K562 (cell line): ENCODE measurements at regions of chr5 and their contacts with region 1.

Region 1: DNA sequence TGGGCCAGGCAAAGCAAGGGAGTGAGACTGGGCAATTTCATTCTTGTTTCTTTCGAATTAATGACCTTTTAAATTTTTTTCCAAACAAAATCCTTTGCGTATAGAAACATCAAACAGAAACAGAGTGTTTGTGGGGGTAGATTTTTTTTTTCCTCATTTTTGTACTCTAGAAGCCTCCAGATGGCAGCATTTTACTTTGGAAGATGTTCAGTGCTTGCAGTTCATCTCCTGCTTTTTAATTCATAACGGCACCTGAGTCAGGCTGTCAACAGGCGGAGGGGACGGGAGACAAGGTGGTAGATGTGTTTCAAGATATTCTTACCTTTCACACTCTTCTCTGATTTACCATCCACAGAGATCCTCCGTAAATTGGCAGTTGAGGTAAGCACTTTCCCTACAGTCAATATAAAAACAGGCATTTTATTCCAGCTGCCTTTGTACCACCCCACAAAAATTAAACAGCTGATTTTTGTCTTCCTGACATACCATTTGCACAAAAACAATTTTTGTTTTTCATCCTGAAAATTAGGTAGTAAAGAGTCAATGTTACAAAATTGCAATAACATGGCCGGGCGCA is 99.5 kb upstream of the FBXL17 start:
- DNase-seq: peak; percentile 9 to 53 (median 12)
- ATAC-seq: peak; percentile 74
- H3K4me3 ChIP-seq: no peak overlapping the region
- H3K27ac ChIP-seq: no peak overlapping the region
- H3K4me1 ChIP-seq: no peaks in the 10 kb centered on the region
- H3K27me3 ChIP-seq: no peaks in the 10 kb centered on the region; a peak in 1 of 5 replicates
- CTCF ChIP-seq: peak; percentile 31 to 65 (median 50); a peak in 5 of 6 replicates
- EP300 ChIP-seq: no peak
- POLR2A ChIP-seq: no peak
- RAD21 ChIP-seq: peak; percentile 78 to 79

Region 2: DNA sequence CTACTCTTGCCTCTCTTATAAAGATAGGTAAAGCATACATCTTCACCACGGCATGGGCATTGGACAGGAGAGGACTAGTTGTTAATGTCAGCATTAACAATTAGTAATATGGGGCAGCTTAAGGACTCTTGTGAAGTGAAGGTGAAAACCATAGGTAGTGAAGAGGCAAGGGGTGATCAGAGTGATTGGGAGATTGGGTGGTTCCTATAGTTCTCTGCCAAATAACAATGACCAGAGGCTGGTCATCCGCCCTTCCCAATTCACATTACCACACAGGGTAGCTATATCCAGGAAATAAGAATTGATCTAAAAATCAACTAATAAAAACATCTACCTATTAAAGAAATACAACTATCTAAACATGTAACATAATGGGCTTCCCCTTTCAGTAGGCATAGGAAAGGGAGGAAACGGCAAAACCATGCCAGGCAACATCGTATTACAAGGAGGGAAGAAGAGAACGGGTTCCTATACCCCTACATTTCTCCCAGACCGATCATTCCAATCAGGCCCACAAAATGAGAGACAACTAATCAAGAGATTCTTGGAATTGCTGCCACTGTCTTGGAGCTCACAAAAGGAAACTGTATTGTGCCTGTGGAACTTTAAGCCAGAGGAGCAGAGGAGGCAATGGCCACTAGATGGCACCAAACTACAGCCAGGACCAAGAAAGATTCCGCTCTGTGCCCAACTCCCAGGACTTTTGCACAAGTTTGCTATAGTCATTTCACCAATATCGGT is 221.2 kb before region 1 on chr5:
- CTCF ChIA-PET with region 1: no interaction called
- POLR2A ChIA-PET with region 1: no interaction called
- in situ Hi-C with region 1: no loop called
- intact Hi-C with region 1: loop called (anchors 5 kb)
- DNase-seq: peak; percentile 65 to 87 (median 69)
- ATAC-seq: peak; percentile 99
- H3K4me3 ChIP-seq: no peak overlapping the region
- H3K27ac ChIP-seq: no peak overlapping the region
- H3K4me1 ChIP-seq: no peaks in the 10 kb centered on the region; a peak in 3 of 5 replicates
- H3K27me3 ChIP-seq: no peaks in the 10 kb centered on the region
- CTCF ChIP-seq: peak; percentile 82 to 91 (median 89)
- EP300 ChIP-seq: no peak
- POLR2A ChIP-seq: no peak
- RAD21 ChIP-seq: peak; percentile 89 to 92